GM12878 (cell line): ENCODE measurements at regions of chr13 and their contacts with region 1.

Region 1: DNA sequence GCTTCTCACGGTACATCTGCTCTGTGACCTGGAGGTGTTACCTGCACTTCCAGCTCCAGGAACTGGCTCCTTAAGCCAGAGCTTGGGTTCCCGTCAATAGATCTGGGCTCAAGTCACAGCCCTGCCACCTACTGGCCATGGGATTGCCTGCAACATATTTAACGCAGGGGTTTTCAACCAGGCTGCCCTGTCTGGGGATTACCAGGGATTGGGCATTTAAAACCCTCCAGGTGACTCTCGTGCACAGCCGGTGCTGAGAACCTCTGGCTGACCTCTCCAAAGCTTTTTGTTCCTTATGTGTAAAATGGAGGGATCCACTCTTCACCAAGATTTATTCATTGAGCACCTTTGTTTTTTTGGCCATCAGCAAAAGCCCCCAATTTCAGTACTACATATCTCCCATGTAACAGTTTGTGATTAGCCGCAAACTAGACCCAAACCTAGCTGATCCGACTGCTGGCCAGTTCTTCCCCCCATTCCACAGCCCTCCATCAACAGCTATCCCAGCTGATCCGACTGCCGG is 76.6 kb upstream of the STK24 start:
- DNase-seq: peak; percentile 39
- ATAC-seq: peak; percentile 99
- H3K4me3 ChIP-seq: no peak overlapping the region
- H3K27ac ChIP-seq: no peak overlapping the region
- H3K4me1 ChIP-seq: peaks cover 3% of the 10 kb centered on the region; the same call in 1 of the 2 replicates
- H3K27me3 ChIP-seq: no peaks in the 10 kb centered on the region
- CTCF ChIP-seq: peak; percentile 91 to 92 (median 92)
- EP300 ChIP-seq: no peak
- POLR2A ChIP-seq: no peak
- RAD21 ChIP-seq: peak; percentile 94

Region 2: GRCh38 chr13:97855570-97856303 is 797.8 kb before region 1 on chr13:
- CTCF ChIA-PET with region 1: interaction called, 17 read pairs
- POLR2A ChIA-PET with region 1: no interaction called
- RAD21 ChIA-PET with region 1: interaction called, 13 read pairs
- SMC1A ChIA-PET with region 1: interaction called, 4 read pairs
- in situ Hi-C with region 1: no loop called
- intact Hi-C with region 1: no loop called
- DNase-seq: peak; percentile 13
- ATAC-seq: peak; percentile 93
- H3K4me3 ChIP-seq: no peak overlapping the region
- H3K27ac ChIP-seq: no peak overlapping the region
- H3K4me1 ChIP-seq: peaks cover 13% of the 10 kb centered on the region
- H3K27me3 ChIP-seq: 0 out of 4 replicates have a peak, but pooled peaks cover 0 to 2% of the 10 kb centered on the region in 2 experiments
- CTCF ChIP-seq: peak; percentile 76 to 82 (median 77)
- EP300 ChIP-seq: no peak
- POLR2A ChIP-seq: no peak
- RAD21 ChIP-seq: peak; percentile 72

Region 3: DNA sequence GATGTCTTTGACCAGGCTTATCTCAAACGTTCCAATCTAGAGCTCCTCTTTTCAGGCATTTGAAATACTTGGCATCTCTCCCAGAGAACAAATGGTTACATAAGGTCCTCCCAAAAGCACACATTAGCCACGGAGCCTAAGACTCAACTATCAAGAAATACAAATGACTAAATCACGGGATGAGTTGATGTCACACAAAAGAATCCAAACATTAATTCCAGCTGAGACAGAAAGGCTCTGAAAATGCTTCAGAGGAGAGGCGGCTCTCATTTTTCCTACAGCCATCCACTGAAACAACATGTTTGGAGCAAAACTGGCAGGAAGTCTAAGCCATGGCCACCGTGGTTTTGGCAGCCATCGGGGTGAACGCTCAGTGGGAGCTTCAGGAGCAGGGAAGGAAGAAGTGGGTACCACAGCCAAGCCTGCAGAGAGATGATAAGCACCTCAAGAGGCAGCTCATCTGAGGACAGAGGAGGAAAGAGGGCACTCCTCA is 199.1 kb before region 1 on chr13:
- CTCF ChIA-PET with region 1: interaction called, 14 read pairs
- POLR2A ChIA-PET with region 1: no interaction called
- RAD21 ChIA-PET with region 1: interaction called, 8 read pairs
- SMC1A ChIA-PET with region 1: interaction called, 5 read pairs
- in situ Hi-C with region 1: loop called (anchors 5 kb)
- intact Hi-C with region 1: no loop called
- DNase-seq: no peak
- ATAC-seq: no peak
- H3K4me3 ChIP-seq: no peak overlapping the region
- H3K27ac ChIP-seq: no peak overlapping the region
- H3K4me1 ChIP-seq: no peaks in the 10 kb centered on the region
- H3K27me3 ChIP-seq: no peaks in the 10 kb centered on the region
- CTCF ChIP-seq: no peak
- EP300 ChIP-seq: no peak
- POLR2A ChIP-seq: no peak
- RAD21 ChIP-seq: no peak

Region 4: GRCh38 chr13:98476538-98476966 is 177.0 kb before region 1 on chr13:
- CTCF ChIA-PET with region 1: interaction called, 56 read pairs
- POLR2A ChIA-PET with region 1: no interaction called
- RAD21 ChIA-PET with region 1: interaction called, 40 read pairs
- SMC1A ChIA-PET with region 1: interaction called, 38 read pairs
- in situ Hi-C with region 1: no loop called
- intact Hi-C with region 1: no loop called
- DNase-seq: peak; percentile 90
- ATAC-seq: peak; percentile 94
- H3K4me3 ChIP-seq: peak overlapping the region; percentile 13; the same call in 1 of the 2 replicates
- H3K27ac ChIP-seq: peak overlapping the region; percentile 67
- H3K4me1 ChIP-seq: peaks cover 44% of the 10 kb centered on the region
- H3K27me3 ChIP-seq: no peaks in the 10 kb centered on the region
- CTCF ChIP-seq: no peak
- EP300 ChIP-seq: peak; percentile 96 to 97
- POLR2A ChIP-seq: peak; percentile 70
- RAD21 ChIP-seq: 0 out of 2 replicates have a peak, but pooled peaks have one; percentile 1

Region 5: GRCh38 chr13:98504371-98504963 is 149.1 kb before region 1 on chr13:
- CTCF ChIA-PET with region 1: interaction called, 20 read pairs
- POLR2A ChIA-PET with region 1: no interaction called
- RAD21 ChIA-PET with region 1: interaction called, 11 read pairs
- SMC1A ChIA-PET with region 1: interaction called, 12 read pairs
- in situ Hi-C with region 1: no loop called
- intact Hi-C with region 1: no loop called
- DNase-seq: peak; percentile 56
- ATAC-seq: peak; percentile 75
- H3K4me3 ChIP-seq: peak overlapping the region; percentile 15; the same call in 1 of the 2 replicates
- H3K27ac ChIP-seq: peak overlapping the region; percentile 49
- H3K4me1 ChIP-seq: peaks cover 75% of the 10 kb centered on the region
- H3K27me3 ChIP-seq: no peaks in the 10 kb centered on the region
- CTCF ChIP-seq: no peak
- EP300 ChIP-seq: peak; percentile 46 to 82; a peak in 3 of 4 replicates
- POLR2A ChIP-seq: no peak
- RAD21 ChIP-seq: 0 out of 2 replicates have a peak, but pooled peaks have one; percentile 20

Region 6: GRCh38 chr13:98570929-98571372 is 82.6 kb before region 1 on chr13:
- CTCF ChIA-PET with region 1: interaction called, 9 read pairs
- POLR2A ChIA-PET with region 1: no interaction called
- RAD21 ChIA-PET with region 1: interaction called, 13 read pairs
- SMC1A ChIA-PET with region 1: interaction called, 7 read pairs
- in situ Hi-C with region 1: no loop called
- intact Hi-C with region 1: loop called (anchors 5 kb)
- DNase-seq: peak; percentile 92
- ATAC-seq: peak; percentile 83
- H3K4me3 ChIP-seq: peak overlapping the region; percentile 87
- H3K27ac ChIP-seq: peak overlapping the region; percentile 73
- H3K4me1 ChIP-seq: peaks cover 42% of the 10 kb centered on the region
- H3K27me3 ChIP-seq: no peaks in the 10 kb centered on the region
- CTCF ChIP-seq: no peak
- EP300 ChIP-seq: peak; percentile 29 to 40; a peak in 2 of 4 replicates
- POLR2A ChIP-seq: no peak
- RAD21 ChIP-seq: no peak

Region 7: GRCh38 chr13:98664039-98664438 is 10.5 kb after region 1 on chr13:
- CTCF ChIA-PET with region 1: interaction called, 11 read pairs
- POLR2A ChIA-PET with region 1: no interaction called
- RAD21 ChIA-PET with region 1: interaction called, 6 read pairs
- SMC1A ChIA-PET with region 1: interaction called, 12 read pairs
- in situ Hi-C with region 1: no loop called
- intact Hi-C with region 1: no loop called
- DNase-seq: no peak
- ATAC-seq: peak; percentile 29
- H3K4me3 ChIP-seq: no peak overlapping the region
- H3K27ac ChIP-seq: no peak overlapping the region
- H3K4me1 ChIP-seq: no peaks in the 10 kb centered on the region
- H3K27me3 ChIP-seq: no peaks in the 10 kb centered on the region
- CTCF ChIP-seq: no peak
- EP300 ChIP-seq: no peak
- POLR2A ChIP-seq: no peak
- RAD21 ChIP-seq: no peak